ENCODE measurements at regions of chr20 and their contacts with region 1.

Region 1: GRCh38 chr20:31849455-31849925 is 4.1 kb upstream of the FOXS1 start:
- DNase-seq: no peak
- ATAC-seq: no peak
- H3K4me3 Mint-ChIP-seq: no peak overlapping the region
- H3K27ac Mint-ChIP-seq: no peak overlapping the region
- H3K4me1 Mint-ChIP-seq: no peaks in the 10 kb centered on the region
- H3K27me3 Mint-ChIP-seq: peaks cover 13% of the 10 kb centered on the region

Region 2: DNA sequence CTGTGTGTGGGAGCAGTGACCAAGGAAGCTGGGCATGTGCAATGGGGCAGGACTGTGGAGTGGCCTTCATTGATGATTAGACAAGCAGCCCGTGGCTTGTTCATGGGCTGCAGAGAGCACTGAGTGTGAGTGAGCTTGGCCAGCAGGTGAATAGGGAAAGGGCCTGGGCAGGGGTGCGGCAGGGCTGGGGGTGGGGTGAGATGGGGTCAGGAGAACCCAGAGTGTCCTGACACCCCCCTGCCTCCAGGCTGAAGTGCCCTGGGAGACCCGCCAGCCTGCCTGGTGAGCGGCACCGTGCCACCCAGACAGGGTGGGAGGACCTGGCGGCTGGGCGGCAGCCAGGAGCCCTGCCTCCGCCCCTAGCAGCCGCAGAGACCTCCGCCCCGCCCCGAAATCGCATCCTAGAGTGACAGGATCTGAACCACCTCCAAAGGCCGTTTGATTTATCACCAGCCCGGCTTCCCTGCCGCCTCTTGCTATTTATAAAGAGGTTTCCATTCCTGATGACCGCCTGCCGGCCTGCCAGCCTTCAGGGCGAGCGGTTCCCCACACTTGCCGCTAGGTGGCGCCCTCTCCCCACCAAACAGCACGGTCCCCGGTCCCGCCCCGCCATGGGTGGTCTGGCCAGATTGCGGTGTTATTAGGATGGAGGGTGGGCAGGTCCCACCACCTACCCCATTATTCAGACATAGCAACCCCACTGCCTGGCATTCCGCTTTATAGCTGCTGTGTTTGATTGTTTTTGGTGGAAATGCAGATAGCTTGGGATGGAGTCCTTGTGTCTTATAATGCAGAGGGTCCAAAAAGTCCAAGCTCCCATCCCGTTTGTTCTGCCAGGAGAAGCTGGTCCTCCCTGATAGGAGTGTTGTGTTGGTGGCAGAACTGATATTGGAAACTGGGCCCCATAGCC is 26.8 kb before region 1 on chr20:
- CTCF ChIA-PET with region 1: interaction called, 53 read pairs
- POLR2A ChIA-PET with region 1: interaction called, 5 read pairs
- DNase-seq: peak; percentile 82
- ATAC-seq: peak; percentile 86
- H3K4me3 Mint-ChIP-seq: no peak overlapping the region
- H3K27ac Mint-ChIP-seq: no peak overlapping the region
- H3K4me1 Mint-ChIP-seq: peaks cover 16% of the 10 kb centered on the region
- H3K27me3 Mint-ChIP-seq: no peaks in the 10 kb centered on the region

Region 3: DNA sequence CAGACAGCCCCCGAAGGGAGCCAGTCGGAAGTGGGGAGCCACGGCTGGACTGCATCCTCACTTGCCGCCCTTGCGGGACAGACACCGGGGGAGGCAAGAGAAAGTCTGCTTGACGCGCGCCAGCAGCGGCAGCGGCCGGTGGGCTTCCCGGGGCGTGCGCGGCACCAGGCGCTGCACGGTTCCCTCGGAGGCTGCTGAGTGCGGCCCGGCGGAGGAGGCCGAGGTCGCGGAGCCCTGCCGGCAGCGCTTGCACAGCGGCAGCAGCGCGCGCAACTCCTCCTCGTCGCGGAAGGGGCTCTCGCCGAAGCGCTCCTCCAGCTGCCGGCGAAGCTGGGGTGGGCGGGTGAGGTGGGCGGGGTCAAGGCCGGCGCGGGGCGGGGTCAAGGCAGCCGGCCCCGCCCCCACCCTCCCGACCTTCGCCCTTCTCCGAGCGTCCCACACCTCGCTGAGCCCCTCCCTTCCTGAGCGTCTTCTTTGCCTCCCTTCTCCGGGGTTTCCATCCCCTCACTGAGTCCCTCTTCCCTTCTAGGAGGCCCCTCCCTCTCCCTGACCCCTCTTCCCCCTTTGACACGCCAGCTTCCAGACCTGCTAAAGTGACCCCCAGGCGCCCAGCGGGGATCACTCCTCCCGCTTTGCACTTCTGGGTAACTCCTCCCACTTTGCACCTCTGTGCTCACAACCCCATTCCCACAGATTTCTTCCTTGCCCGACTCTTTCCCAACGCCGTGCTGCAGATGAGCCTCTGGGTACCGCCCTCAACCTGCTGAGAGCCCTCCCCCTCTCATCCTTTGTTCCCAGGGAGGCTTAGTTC is 12.1 kb after region 1 on chr20:
- CTCF ChIA-PET with region 1: interaction called, 17 read pairs
- POLR2A ChIA-PET with region 1: no interaction called
- DNase-seq: peak; percentile 82
- ATAC-seq: peak; percentile 93
- H3K4me3 Mint-ChIP-seq: peak overlapping the region; percentile 26
- H3K27ac Mint-ChIP-seq: no peak overlapping the region
- H3K4me1 Mint-ChIP-seq: peaks cover 23% of the 10 kb centered on the region
- H3K27me3 Mint-ChIP-seq: peaks cover 28% of the 10 kb centered on the region

Region 4: GRCh38 chr20:31951530-31952453 is 102.3 kb after region 1 on chr20 and contains the start of gene PDRG1:
- CTCF ChIA-PET with region 1: interaction called, 103 read pairs
- POLR2A ChIA-PET with region 1: interaction called, 4 read pairs
- DNase-seq: peak; percentile 98
- ATAC-seq: peak; percentile 97
- H3K4me3 Mint-ChIP-seq: peak within 1 kb of the TSS; percentile 98
- H3K27ac Mint-ChIP-seq: peak within 1 kb of the TSS; percentile 96
- H3K4me1 Mint-ChIP-seq: peaks cover 30% of the 10 kb centered on the region
- H3K27me3 Mint-ChIP-seq: peaks cover 8% of the 10 kb centered on the region
- total RNA-seq, gene PDRG1: 15.0 to 16.1 TPM

Region 5: GRCh38 chr20:32652739-32653526 is 803.4 kb after region 1 on chr20:
- CTCF ChIA-PET with region 1: interaction called, 11 read pairs
- POLR2A ChIA-PET with region 1: no interaction called
- DNase-seq: peak; percentile 91
- ATAC-seq: peak; percentile 98
- H3K4me3 Mint-ChIP-seq: peak overlapping the region; percentile 34
- H3K27ac Mint-ChIP-seq: peak overlapping the region; percentile 47
- H3K4me1 Mint-ChIP-seq: peaks cover 15% of the 10 kb centered on the region
- H3K27me3 Mint-ChIP-seq: no peaks in the 10 kb centered on the region